IMR-90 (cell line): ENCODE measurements at regions of chr3 and their contacts with region 1.

Region 1: GRCh38 chr3:99532246-99532645 is 106.1 kb upstream of the COL8A1 start:
- DNase-seq: peak; percentile 77
- ATAC-seq: peak; percentile 64
- H3K4me3 ChIP-seq: no peak overlapping the region
- H3K27ac ChIP-seq: no peak overlapping the region
- H3K4me1 ChIP-seq: peaks cover 13% of the 10 kb centered on the region
- H3K27me3 ChIP-seq: no peaks in the 10 kb centered on the region
- CTCF ChIP-seq: peak; percentile 69
- POLR2A ChIP-seq: no peak
- RAD21 ChIP-seq: peak; percentile 75

Region 2: GRCh38 chr3:98994128-98994762 is 538.0 kb before region 1 on chr3:
- CTCF ChIA-PET with region 1: no interaction called
- POLR2A ChIA-PET with region 1: no interaction called
- dilution Hi-C with region 1: no loop called
- in situ Hi-C with region 1: no loop called
- intact Hi-C with region 1: no loop called
- DNase-seq: peak; percentile 81
- ATAC-seq: peak; percentile 85
- H3K4me3 ChIP-seq: no peak overlapping the region
- H3K27ac ChIP-seq: no peak overlapping the region
- H3K4me1 ChIP-seq: no peaks in the 10 kb centered on the region
- H3K27me3 ChIP-seq: no peaks in the 10 kb centered on the region
- CTCF ChIP-seq: peak; percentile 85
- POLR2A ChIP-seq: 0 out of 2 replicates have a peak, but pooled peaks have one; percentile 24
- RAD21 ChIP-seq: peak; percentile 93

Region 3: DNA sequence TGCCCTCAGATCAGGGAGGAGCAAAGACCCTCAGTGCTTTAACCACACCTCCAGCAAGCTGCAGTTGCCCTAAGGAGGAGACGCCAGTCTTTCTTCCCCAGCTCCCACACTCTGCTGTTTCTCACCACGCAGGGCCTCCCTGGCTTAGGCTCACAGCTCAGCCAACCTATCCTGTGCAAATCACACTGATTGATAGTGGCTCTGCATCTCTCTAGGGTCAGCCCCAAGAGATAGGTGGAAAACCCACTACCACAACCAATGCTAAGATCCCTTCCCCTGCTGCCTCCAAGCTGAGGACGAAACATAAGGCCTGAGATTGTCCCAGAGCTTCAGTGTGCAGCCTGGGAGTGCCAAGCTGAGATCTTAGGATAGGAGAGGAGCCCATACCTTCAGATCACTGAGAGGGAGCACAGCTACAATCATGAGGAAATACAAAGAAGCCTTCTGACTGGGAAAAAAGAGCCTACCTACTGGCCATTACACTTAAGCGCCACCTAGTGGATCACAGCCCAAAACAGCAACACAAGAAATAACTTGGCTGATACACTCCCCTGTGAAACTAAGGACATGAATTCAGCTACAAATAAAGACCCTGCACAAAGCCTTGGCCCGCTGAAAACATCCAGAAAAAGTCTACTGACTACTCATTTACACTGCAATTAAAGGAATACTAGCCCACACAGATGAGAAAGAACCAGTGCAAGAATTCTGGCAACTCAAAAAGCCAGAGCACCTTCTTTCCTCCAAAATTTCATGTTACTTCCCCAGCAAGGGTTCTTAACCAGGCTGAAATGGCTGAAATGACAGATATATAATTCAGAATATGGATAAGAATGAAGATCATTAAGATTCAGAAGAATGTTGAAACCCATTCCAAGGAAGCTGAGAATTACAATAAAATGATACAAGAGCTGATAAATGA is 359.2 kb before region 1 on chr3:
- CTCF ChIA-PET with region 1: interaction called, 4 read pairs
- POLR2A ChIA-PET with region 1: no interaction called
- dilution Hi-C with region 1: no loop called
- in situ Hi-C with region 1: no loop called
- intact Hi-C with region 1: loop called (anchors 1 kb)
- DNase-seq: peak; percentile 80
- ATAC-seq: peak; percentile 82
- H3K4me3 ChIP-seq: no peak overlapping the region
- H3K27ac ChIP-seq: no peak overlapping the region
- H3K4me1 ChIP-seq: no peaks in the 10 kb centered on the region
- H3K27me3 ChIP-seq: no peaks in the 10 kb centered on the region
- CTCF ChIP-seq: peak; percentile 86
- POLR2A ChIP-seq: no peak
- RAD21 ChIP-seq: peak; percentile 87

Region 4: GRCh38 chr3:99505646-99506269 is 26.5 kb before region 1 on chr3:
- CTCF ChIA-PET with region 1: interaction called, 7 read pairs
- POLR2A ChIA-PET with region 1: no interaction called
- dilution Hi-C with region 1: no loop called
- in situ Hi-C with region 1: no loop called
- intact Hi-C with region 1: loop called (anchors 2 kb)
- DNase-seq: peak; percentile 96
- ATAC-seq: peak; percentile 20
- H3K4me3 ChIP-seq: no peak overlapping the region
- H3K27ac ChIP-seq: peak overlapping the region; percentile 15
- H3K4me1 ChIP-seq: peaks cover 17% of the 10 kb centered on the region
- H3K27me3 ChIP-seq: no peaks in the 10 kb centered on the region
- CTCF ChIP-seq: no peak
- POLR2A ChIP-seq: no peak
- RAD21 ChIP-seq: no peak

Region 5: DNA sequence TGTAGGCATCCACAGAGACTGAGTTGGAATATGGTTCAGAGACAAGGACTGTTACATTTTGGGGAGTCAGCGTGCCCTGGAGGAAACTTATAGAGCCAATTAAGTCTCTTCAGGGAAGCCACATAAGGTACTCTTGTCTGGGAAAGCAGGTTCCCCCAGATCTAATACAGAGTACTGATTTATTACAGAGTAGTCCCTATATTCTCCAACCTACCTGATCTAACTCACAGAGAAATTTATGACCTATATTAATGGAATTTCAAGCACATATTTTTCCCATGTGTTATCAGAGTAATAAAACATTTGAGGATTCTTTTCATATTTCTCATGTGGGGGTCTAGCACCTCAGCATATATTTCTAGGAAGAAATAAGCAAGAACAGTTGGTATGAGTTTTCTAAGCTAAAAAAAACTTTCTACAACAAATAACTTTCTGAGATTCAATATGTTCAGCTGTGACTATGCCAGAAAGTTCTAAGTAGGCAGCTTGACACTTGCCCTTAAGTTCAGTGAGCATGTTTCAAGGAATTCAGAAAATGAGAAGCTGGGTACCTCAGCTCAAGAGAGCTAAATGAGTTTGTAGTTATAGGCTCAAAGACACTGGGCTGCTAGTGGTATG is 30.9 kb after region 1 on chr3:
- CTCF ChIA-PET with region 1: interaction called, 12 read pairs
- POLR2A ChIA-PET with region 1: no interaction called
- dilution Hi-C with region 1: no loop called
- in situ Hi-C with region 1: no loop called
- intact Hi-C with region 1: no loop called
- DNase-seq: peak; percentile 66
- ATAC-seq: peak; percentile 84
- H3K4me3 ChIP-seq: no peak overlapping the region
- H3K27ac ChIP-seq: peak overlapping the region; percentile 49; the same call in 1 of the 2 replicates
- H3K4me1 ChIP-seq: peaks cover 5% of the 10 kb centered on the region; the same call in 1 of the 2 replicates
- H3K27me3 ChIP-seq: no peaks in the 10 kb centered on the region
- CTCF ChIP-seq: no peak
- POLR2A ChIP-seq: no peak
- RAD21 ChIP-seq: no peak

Region 6: GRCh38 chr3:99970198-99970597 is 438.0 kb after region 1 on chr3:
- CTCF ChIA-PET with region 1: no interaction called
- POLR2A ChIA-PET with region 1: no interaction called
- dilution Hi-C with region 1: no loop called
- in situ Hi-C with region 1: no loop called
- intact Hi-C with region 1: no loop called
- DNase-seq: no peak
- ATAC-seq: no peak
- H3K4me3 ChIP-seq: no peak overlapping the region
- H3K27ac ChIP-seq: no peak overlapping the region
- H3K4me1 ChIP-seq: peaks cover 12% of the 10 kb centered on the region
- H3K27me3 ChIP-seq: no peaks in the 10 kb centered on the region
- CTCF ChIP-seq: no peak
- POLR2A ChIP-seq: no peak
- RAD21 ChIP-seq: no peak